ENCODE measurements at regions of chr6 and their contacts with region 1.

Region 1: DNA sequence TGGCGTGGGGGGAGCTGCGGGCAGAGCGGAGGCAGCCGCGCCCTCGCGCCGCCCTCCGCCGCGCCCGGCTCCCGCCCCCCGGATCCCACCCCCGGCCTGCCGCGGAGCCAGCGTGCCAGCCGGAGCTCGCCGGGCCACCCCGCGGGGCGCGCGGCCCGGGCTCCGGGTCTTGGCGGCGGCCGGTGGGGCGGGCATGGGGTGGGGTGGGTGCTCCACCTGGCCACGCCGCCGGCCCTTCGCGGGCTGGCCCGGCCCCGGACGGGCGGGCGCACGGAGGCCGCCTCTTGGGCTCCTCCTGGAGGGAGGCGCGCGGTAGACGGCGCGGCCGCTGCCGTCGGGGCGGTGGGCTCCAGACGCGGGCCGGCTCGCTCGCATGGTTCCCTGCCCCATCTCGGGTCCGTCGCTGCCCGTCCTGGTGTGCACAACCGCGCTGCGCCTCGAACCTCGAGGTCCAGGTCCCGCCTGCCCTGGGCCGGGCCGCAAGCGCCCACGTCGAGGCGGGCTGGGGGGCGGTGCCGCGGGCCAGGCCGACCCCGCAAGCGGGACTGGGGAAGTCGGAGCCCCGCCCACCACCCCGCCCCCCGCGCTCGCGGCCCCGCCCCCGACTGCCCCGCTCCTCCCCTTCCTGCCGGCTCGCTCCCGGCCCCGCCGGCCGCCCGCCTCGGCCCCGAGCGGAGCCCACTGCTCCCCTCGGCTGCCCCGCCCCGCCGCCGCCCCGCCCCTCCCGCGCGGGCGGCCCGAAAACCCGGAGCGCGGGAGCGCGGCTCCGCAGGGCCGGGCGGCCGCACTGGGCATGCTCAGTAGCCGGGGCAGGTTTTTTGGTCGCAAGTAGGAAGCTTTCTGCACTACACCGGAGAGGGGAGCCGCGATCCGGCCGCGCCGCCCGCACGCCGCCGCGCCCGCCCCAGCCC is at the start of gene CDYL:
- DNase-seq: peak; percentile 83 to 92 (median 90)
- H3K4me3 ChIP-seq: peak within 1 kb of the TSS; percentile 71 to 75
- H3K4me3 Mint-ChIP-seq: peak within 1 kb of the TSS; percentile 90 to 96 (median 92)
- H3K27ac ChIP-seq: peak within 1 kb of the TSS; percentile 52
- H3K27ac Mint-ChIP-seq: peak within 1 kb of the TSS; percentile 65 to 96 (median 91)
- H3K4me1 ChIP-seq: peaks cover 42% of the 10 kb centered on the region
- H3K4me1 Mint-ChIP-seq: peaks cover 31 to 51% (median 40%) of the 10 kb centered on the region in 4 donors
- H3K27me3 ChIP-seq: no peaks in the 10 kb centered on the region
- H3K27me3 Mint-ChIP-seq: no peaks in the 10 kb centered on the region
- total RNA-seq, gene CDYL: 31.7 to 36.7 TPM

Region 2: GRCh38 chr6:3258720-3259490 is 1516.9 kb before region 1 on chr6 and contains the start of gene PSMG4:
- CTCF ChIA-PET with region 1: no interaction called
- POLR2A ChIA-PET with region 1: no interaction called
- intact Hi-C with region 1: loop called (anchors 5 kb)
- DNase-seq: peak; percentile 87 to 92 (median 88)
- H3K4me3 ChIP-seq: peak within 1 kb of the TSS; percentile 44 to 67
- H3K4me3 Mint-ChIP-seq: peak within 1 kb of the TSS; percentile 93 to 99 (median 96)
- H3K27ac ChIP-seq: peak within 1 kb of the TSS; percentile 70
- H3K27ac Mint-ChIP-seq: peak within 1 kb of the TSS; percentile 92 to 99 (median 95)
- H3K4me1 ChIP-seq: peaks cover 45% of the 10 kb centered on the region
- H3K4me1 Mint-ChIP-seq: peaks cover 21 to 49% (median 37%) of the 10 kb centered on the region in 4 donors
- H3K27me3 ChIP-seq: no peaks in the 10 kb centered on the region
- H3K27me3 Mint-ChIP-seq: no peaks in the 10 kb centered on the region
- total RNA-seq, gene PSMG4: 41.0 to 41.6 TPM

Region 3: DNA sequence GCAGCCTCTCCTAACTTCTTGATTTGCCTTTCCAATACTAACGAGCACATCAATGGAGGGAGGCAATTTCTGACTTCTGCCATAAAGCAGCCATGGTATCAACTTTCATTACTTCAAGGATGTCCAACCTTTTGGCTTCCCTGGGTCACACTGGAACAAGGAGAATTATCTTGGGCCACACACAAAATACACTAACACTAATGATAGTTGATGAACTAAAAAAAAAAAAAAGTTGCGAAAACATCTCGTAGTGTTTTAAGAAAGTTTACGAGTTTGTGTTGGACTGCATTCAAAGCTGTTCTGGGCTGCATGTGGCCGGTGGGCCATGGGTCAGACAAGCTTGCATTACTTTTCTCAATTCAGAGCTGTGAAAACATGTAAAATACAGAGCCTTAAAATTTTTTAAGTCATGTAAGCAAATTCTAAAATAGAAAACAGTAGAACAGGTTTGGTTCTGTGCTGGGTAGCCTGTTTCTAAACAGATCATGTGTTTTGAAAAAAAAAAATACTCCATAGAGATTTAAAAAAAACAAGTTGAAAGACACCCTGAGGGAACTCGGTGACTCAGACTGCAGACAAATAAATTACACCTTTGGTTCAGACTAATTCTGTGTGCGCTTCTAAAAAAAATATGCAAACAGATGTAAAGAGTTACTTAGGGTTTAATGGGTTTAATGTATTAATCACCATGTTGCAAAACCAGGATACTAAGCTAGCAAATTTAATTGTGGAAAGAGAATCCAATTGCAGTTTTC is 1275.4 kb before region 1 on chr6:
- CTCF ChIA-PET with region 1: no interaction called
- POLR2A ChIA-PET with region 1: no interaction called
- intact Hi-C with region 1: no loop called
- DNase-seq: no peak
- H3K4me3 ChIP-seq: no peak overlapping the region
- H3K4me3 Mint-ChIP-seq: no peak overlapping the region
- H3K27ac ChIP-seq: no peak overlapping the region
- H3K27ac Mint-ChIP-seq: no peak overlapping the region
- H3K4me1 ChIP-seq: no peaks in the 10 kb centered on the region
- H3K4me1 Mint-ChIP-seq: no peaks in the 10 kb centered on the region
- H3K27me3 ChIP-seq: no peaks in the 10 kb centered on the region
- H3K27me3 Mint-ChIP-seq: peaks cover 15 to 20% of the 10 kb centered on the region in 2 donors

Region 4: GRCh38 chr6:3751730-3752542 is 1023.9 kb before region 1 on chr6:
- CTCF ChIA-PET with region 1: no interaction called
- POLR2A ChIA-PET with region 1: no interaction called
- intact Hi-C with region 1: loop called (anchors 5 kb)
- DNase-seq: peak; percentile 46 to 78 (median 51)
- H3K4me3 ChIP-seq: peak overlapping the region in 1 of 2 donors; percentile 38
- H3K4me3 Mint-ChIP-seq: peak overlapping the region in 7 of 8 donors; percentile 21 to 73 (median 57)
- H3K27ac ChIP-seq: no peak overlapping the region
- H3K27ac Mint-ChIP-seq: no peak overlapping the region
- H3K4me1 ChIP-seq: peaks cover 11% of the 10 kb centered on the region
- H3K4me1 Mint-ChIP-seq: peaks cover 0 to 27% (median 3%) of the 10 kb centered on the region in 4 donors
- H3K27me3 ChIP-seq: no peaks in the 10 kb centered on the region
- H3K27me3 Mint-ChIP-seq: peaks cover 20 to 23% of the 10 kb centered on the region in 2 donors

Region 5: GRCh38 chr6:5003604-5004372 is 227.9 kb after region 1 on chr6 and contains the start of gene RPP40:
- CTCF ChIA-PET with region 1: interaction called, 4 read pairs
- POLR2A ChIA-PET with region 1: interaction called, 5 read pairs
- intact Hi-C with region 1: loop called (anchors 1 kb)
- DNase-seq: peak; percentile 98 to 99 (median 99)
- H3K4me3 ChIP-seq: peak within 1 kb of the TSS; percentile 33 to 85
- H3K4me3 Mint-ChIP-seq: peak within 1 kb of the TSS; percentile 93 to 97 (median 94)
- H3K27ac ChIP-seq: peak within 1 kb of the TSS; percentile 68
- H3K27ac Mint-ChIP-seq: peak within 1 kb of the TSS; percentile 94 to 97 (median 95)
- H3K4me1 ChIP-seq: peaks cover 10% of the 10 kb centered on the region
- H3K4me1 Mint-ChIP-seq: peaks cover 3 to 17% (median 10%) of the 10 kb centered on the region in 4 donors
- H3K27me3 ChIP-seq: no peaks in the 10 kb centered on the region
- H3K27me3 Mint-ChIP-seq: no peaks in the 10 kb centered on the region
- total RNA-seq, gene RPP40: 5.5 to 6.3 TPM

Region 6: DNA sequence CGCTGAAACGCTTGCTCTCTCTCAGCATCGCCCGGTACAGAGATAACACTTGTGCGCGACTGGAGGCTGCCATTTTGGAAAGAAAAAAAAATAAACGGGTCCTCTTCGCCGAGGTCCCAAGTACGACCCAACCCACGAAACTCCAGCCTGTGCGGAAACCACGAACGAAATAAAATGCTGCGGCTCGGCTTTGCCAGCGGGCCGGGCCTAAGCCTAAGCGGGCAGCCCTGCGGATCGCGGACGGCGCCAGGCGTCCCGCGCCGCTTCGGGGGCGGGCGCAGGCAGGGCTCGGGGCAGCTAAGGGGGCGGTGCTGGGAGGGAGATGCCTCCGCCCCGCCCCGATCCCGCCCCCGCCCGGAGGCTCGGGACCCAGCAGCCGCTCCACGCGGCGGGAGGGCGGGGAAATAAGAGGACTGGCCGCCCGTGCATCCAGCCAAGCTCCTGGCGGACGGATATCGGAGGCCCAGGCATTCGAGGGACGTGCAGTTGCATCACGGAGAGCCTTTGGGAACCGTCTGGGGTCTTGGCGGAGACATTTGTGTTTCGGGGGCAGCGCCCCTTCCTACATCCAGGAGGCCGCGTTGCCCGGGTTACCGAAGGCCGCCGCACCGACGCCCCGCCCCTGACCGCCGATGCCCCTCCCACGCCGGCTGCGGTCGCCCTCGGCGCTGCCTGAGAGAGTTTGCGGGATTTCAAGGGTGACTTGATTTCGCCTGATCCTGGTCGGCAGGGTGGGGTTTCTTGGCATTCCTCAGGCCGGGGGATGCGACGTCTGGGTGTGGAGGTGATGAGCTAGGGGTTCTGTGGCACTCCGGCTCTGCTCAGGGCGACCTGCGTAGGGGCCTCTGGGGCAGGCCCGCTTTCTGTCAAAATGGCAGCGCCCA is 485.1 kb after region 1 on chr6 and contains the starts of genes FARS2 and LYRM4:
- CTCF ChIA-PET with region 1: no interaction called
- POLR2A ChIA-PET with region 1: no interaction called
- intact Hi-C with region 1: loop called (anchors 5 kb)
- DNase-seq: peak; percentile 90 to 99 (median 96)
- H3K4me3 ChIP-seq: peak within 1 kb of the TSS; percentile 95 to 96
- H3K4me3 Mint-ChIP-seq: peak within 1 kb of the TSS; percentile 96 to 99 (median 99)
- H3K27ac ChIP-seq: peak within 1 kb of the TSS; percentile 95
- H3K27ac Mint-ChIP-seq: peak within 1 kb of the TSS; percentile 99 to 100 (median 100)
- H3K4me1 ChIP-seq: peaks cover 21% of the 10 kb centered on the region
- H3K4me1 Mint-ChIP-seq: peaks cover 18 to 40% (median 27%) of the 10 kb centered on the region in 4 donors
- H3K27me3 ChIP-seq: no peaks in the 10 kb centered on the region
- H3K27me3 Mint-ChIP-seq: no peaks in the 10 kb centered on the region
- total RNA-seq, gene FARS2: 15.6 to 19.2 TPM
- total RNA-seq, gene LYRM4: 10.6 to 14.3 TPM

Region 7: DNA sequence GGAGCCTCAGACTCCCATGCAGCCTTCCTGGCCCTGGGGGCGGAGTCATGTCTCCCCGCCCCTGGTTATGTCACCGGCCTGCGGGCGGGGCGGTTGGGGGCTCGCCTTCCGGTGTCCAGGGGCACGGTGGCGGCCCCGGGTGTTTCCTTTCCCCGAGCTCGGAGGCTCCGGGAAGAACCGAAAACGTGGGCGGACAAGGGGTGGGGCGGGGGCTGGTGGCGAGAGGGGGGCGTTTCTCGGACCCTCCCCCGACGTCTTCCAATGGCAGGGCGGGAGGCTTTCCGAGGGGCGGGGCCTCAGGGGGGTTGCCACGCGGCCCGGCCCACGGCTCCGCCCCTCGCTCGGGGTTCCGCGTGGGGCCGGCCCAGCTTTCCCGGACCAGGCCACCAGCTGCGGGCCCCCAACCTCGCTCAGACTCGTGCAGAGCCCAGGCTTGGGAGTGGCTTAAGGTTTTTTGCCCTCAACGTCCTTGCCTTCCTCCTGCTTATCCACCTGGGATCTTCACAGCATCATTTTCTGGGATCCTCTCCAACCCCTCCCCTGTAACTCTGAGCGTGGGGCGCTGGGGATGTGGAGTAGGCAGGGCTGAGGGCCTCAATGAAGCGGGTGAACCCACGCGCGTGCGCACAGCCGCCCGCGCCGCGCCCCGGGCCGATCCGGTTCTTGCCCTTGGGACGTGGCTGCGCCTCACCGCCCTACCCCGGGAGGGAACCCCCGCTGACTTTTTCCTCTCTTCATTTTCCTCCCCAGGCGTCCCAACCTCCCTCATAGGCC is 1233.0 kb after region 1 on chr6:
- CTCF ChIA-PET with region 1: no interaction called
- POLR2A ChIA-PET with region 1: no interaction called
- intact Hi-C with region 1: loop called (anchors 10 kb)
- DNase-seq: peak in 1 of 5 donors; percentile 33
- H3K4me3 ChIP-seq: peak overlapping the region; percentile 43 to 52
- H3K4me3 Mint-ChIP-seq: peak overlapping the region; percentile 73 to 90 (median 80)
- H3K27ac ChIP-seq: no peak overlapping the region
- H3K27ac Mint-ChIP-seq: peak overlapping the region in 2 of 7 donors; percentile 73 to 88
- H3K4me1 ChIP-seq: peaks cover 40% of the 10 kb centered on the region
- H3K4me1 Mint-ChIP-seq: peaks cover 21 to 52% (median 38%) of the 10 kb centered on the region in 4 donors
- H3K27me3 ChIP-seq: peaks cover 57% of the 10 kb centered on the region
- H3K27me3 Mint-ChIP-seq: peaks cover 43 to 49% of the 10 kb centered on the region in 2 donors

Region 8: DNA sequence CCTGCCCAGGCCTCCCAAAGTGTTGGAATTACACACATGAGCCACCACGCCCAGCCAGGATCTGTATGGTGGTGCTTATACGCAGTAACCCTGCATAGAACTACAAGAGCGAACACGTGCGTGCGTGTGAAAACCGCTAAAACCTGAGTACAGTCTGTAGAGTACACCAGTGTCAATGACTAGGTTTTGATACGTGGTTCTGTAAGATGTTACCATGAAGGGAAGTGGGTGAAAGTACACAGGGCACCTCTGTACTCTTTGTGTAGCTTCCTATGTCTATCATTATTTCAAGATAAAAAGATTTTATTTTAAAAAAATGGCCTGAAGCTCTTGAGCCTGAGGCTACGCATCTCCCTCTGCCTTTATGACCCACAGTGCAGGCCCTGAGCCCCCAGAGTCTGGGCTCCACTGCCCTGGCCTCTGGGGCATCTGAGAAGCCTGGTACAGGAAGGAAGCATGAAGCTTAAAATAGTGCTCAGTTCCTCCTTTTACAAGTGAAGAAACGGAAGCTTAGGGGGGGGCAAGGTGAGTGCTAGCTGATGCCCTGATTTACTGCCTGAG is 1834.3 kb after region 1 on chr6:
- CTCF ChIA-PET with region 1: no interaction called
- POLR2A ChIA-PET with region 1: no interaction called
- intact Hi-C with region 1: loop called (anchors 10 kb)
- DNase-seq: peak; percentile 61 to 72 (median 64)
- H3K4me3 ChIP-seq: no peak overlapping the region
- H3K4me3 Mint-ChIP-seq: peak overlapping the region in 7 of 8 donors; percentile 53 to 73 (median 61)
- H3K27ac ChIP-seq: peak overlapping the region; percentile 15
- H3K27ac Mint-ChIP-seq: peak overlapping the region; percentile 81 to 98 (median 95)
- H3K4me1 ChIP-seq: peaks cover 67% of the 10 kb centered on the region
- H3K4me1 Mint-ChIP-seq: peaks cover 42 to 74% (median 57%) of the 10 kb centered on the region in 4 donors
- H3K27me3 ChIP-seq: no peaks in the 10 kb centered on the region
- H3K27me3 Mint-ChIP-seq: no peaks in the 10 kb centered on the region

Measured in CD4-positive, alpha-beta memory T cell (primary cell).